Ovary (tissue), 10 donors: ENCODE measurements at regions of chr3 and their contacts with region 1.

Region 1: GRCh38 chr3:173395412-173396181 is 1.9 kb upstream of the NLGN1 start:
- DNase-seq: peak; percentile 69 to 86 (median 85)
- H3K4me3 ChIP-seq: peak overlapping the region; percentile 65
- H3K27ac ChIP-seq: peak overlapping the region; percentile 32 to 88
- H3K4me1 ChIP-seq: no peaks in the 10 kb centered on the region
- H3K27me3 ChIP-seq: no peaks in the 10 kb centered on the region
- CTCF ChIP-seq: peak in 1 of 3 donors; percentile 25
- EP300 ChIP-seq: no peak
- POLR2A ChIP-seq: peak; percentile 70

Region 2: GRCh38 chr3:174440741-174441587 is 1045.4 kb after region 1 on chr3:
- intact Hi-C with region 1: loop called in 1 of 4 experiments (anchors 10 kb)
- DNase-seq: peak; percentile 89 to 94 (median 92)
- H3K4me3 ChIP-seq: peak overlapping the region; percentile 74
- H3K27ac ChIP-seq: peak overlapping the region; percentile 99 to 100
- H3K4me1 ChIP-seq: peaks cover 5% of the 10 kb centered on the region
- H3K27me3 ChIP-seq: no peaks in the 10 kb centered on the region
- CTCF ChIP-seq: peak in 1 of 3 donors; percentile 16
- EP300 ChIP-seq: no peak
- POLR2A ChIP-seq: peak; percentile 53